ENCODE measurements at regions of chr9 and their contacts with region 1.

Region 1: DNA sequence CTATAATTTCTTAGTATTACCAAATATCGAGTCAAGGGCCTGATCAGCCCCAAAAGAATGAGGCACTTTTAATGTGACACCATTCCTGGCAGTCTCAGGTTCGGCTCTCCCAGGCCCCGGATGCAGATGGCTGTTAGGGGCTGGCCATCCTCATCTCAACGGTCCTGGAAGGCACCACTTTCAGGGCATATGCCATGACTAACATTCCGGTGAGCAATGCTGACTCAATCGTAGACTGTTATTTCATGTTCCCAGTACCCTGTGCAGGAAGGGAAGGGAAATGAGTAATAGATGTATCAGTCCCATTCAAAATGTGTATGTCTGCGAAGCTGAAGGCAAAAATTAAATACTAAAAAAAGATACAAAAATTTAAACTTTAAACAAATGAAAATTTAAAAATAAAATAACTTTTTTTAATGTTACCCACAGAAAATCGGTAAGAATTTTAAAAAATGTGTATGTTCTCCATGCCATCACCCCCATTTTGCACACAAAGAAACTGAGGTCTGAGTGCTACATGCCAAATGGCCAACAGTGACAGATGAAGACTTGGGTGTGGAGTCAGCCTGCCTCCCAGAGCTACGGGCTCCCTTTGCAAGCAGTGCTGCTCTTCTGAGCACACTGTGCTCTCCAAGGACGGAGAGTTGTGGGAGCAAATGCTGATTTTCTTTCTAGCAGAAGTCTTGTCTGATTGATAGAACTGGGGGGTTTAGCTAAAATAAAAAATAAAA is 79.0 kb downstream of the GLDC start:
- DNase-seq: peak; percentile 98
- H3K4me3 Mint-ChIP-seq: peak overlapping the region; percentile 64
- H3K27ac Mint-ChIP-seq: peak overlapping the region; percentile 64
- H3K4me1 Mint-ChIP-seq: peaks cover 19% of the 10 kb centered on the region
- H3K27me3 Mint-ChIP-seq: no peaks in the 10 kb centered on the region
- CTCF ChIP-seq: no peak

Region 2: DNA sequence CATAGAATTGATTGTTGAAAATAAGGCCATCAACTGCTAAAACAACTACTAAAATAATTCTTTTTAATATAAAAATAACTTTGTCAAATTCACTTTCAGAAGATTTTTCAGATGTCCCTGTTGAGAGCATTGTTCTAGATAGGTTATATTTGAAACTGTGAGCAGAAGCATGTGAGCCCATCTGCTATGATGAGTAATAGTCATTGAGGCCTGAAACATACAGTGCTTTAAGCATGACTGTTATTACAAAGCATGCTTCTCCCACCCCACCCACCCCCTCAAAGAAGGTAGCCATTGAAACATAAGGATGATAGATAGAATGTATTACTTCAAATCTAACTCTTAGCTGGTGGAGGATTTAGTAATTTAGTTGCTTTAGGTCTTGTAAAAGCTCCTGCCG is 67.6 kb before region 1 on chr9:
- CTCF ChIA-PET with region 1: interaction called, 6 read pairs
- POLR2A ChIA-PET with region 1: no interaction called
- intact Hi-C with region 1: loop called (anchors 5 kb)
- DNase-seq: no peak
- H3K4me3 Mint-ChIP-seq: no peak overlapping the region
- H3K27ac Mint-ChIP-seq: peak overlapping the region; percentile 82
- H3K4me1 Mint-ChIP-seq: peaks cover 14% of the 10 kb centered on the region
- H3K27me3 Mint-ChIP-seq: no peaks in the 10 kb centered on the region
- CTCF ChIP-seq: no peak

Measured in MCF 10A (cell line).